ENCODE measurements at regions of chr2 and their contacts with region 1.

Region 1: GRCh38 chr2:135985018-135985825 is at the start of gene DARS1:
- DNase-seq: peak; percentile 67 to 89 (median 78)
- ATAC-seq: peak; percentile 92
- H3K4me3 ChIP-seq: peak within 1 kb of the TSS; percentile 82
- H3K4me3 Mint-ChIP-seq: peak within 1 kb of the TSS; percentile 90 to 99 (median 97)
- H3K27ac ChIP-seq: peak within 1 kb of the TSS; percentile 95
- H3K27ac Mint-ChIP-seq: peak within 1 kb of the TSS; percentile 98 to 99 (median 98)
- H3K4me1 ChIP-seq: peaks cover 0 to 24% of the 10 kb centered on the region in 2 donors
- H3K4me1 Mint-ChIP-seq: peaks cover 9 to 66% (median 54%) of the 10 kb centered on the region in 7 donors
- H3K27me3 ChIP-seq: no peaks in the 10 kb centered on the region
- H3K27me3 Mint-ChIP-seq: no peaks in the 10 kb centered on the region
- total RNA-seq, gene DARS1: 45.3 to 140 (median 63.4) TPM

Region 2: GRCh38 chr2:135741395-135742324 is 243.6 kb before region 1 on chr2 and contains the start of gene UBXN4:
- CTCF ChIA-PET with region 1: no interaction called
- POLR2A ChIA-PET with region 1: no interaction called
- intact Hi-C with region 1: loop called in 1 of 2 experiments (anchors 1 kb)
- DNase-seq: peak; percentile 73 to 93 (median 88)
- ATAC-seq: peak; percentile 95
- H3K4me3 ChIP-seq: peak within 1 kb of the TSS; percentile 88
- H3K4me3 Mint-ChIP-seq: peak within 1 kb of the TSS; percentile 92 to 98 (median 95)
- H3K27ac ChIP-seq: peak within 1 kb of the TSS; percentile 97
- H3K27ac Mint-ChIP-seq: peak within 1 kb of the TSS; percentile 89 to 99 (median 95)
- H3K4me1 ChIP-seq: peaks cover 20 to 22% of the 10 kb centered on the region in 2 donors
- H3K4me1 Mint-ChIP-seq: peaks cover 24 to 47% (median 43%) of the 10 kb centered on the region in 7 donors
- H3K27me3 ChIP-seq: no peaks in the 10 kb centered on the region
- H3K27me3 Mint-ChIP-seq: no peaks in the 10 kb centered on the region
- total RNA-seq, gene UBXN4: 115 to 158 (median 145) TPM

Region 3: GRCh38 chr2:135960656-135961551 is 24.3 kb before region 1 on chr2:
- CTCF ChIA-PET with region 1: no interaction called
- POLR2A ChIA-PET with region 1: interaction called, 3 read pairs
- intact Hi-C with region 1: loop called (anchors 1 to 2 kb)
- DNase-seq: peak in 6 of 9 donors; percentile 3 to 44 (median 26)
- ATAC-seq: peak; percentile 76
- H3K4me3 ChIP-seq: no peak overlapping the region
- H3K4me3 Mint-ChIP-seq: peak overlapping the region in 9 of 10 donors; percentile 3 to 79 (median 37)
- H3K27ac ChIP-seq: peak overlapping the region; percentile 40
- H3K27ac Mint-ChIP-seq: peak overlapping the region; percentile 51 to 93 (median 83)
- H3K4me1 ChIP-seq: peaks cover 18 to 26% of the 10 kb centered on the region in 2 donors
- H3K4me1 Mint-ChIP-seq: peaks cover 37 to 67% (median 60%) of the 10 kb centered on the region in 7 donors
- H3K27me3 ChIP-seq: no peaks in the 10 kb centered on the region
- H3K27me3 Mint-ChIP-seq: no peaks in the 10 kb centered on the region

Region 4: DNA sequence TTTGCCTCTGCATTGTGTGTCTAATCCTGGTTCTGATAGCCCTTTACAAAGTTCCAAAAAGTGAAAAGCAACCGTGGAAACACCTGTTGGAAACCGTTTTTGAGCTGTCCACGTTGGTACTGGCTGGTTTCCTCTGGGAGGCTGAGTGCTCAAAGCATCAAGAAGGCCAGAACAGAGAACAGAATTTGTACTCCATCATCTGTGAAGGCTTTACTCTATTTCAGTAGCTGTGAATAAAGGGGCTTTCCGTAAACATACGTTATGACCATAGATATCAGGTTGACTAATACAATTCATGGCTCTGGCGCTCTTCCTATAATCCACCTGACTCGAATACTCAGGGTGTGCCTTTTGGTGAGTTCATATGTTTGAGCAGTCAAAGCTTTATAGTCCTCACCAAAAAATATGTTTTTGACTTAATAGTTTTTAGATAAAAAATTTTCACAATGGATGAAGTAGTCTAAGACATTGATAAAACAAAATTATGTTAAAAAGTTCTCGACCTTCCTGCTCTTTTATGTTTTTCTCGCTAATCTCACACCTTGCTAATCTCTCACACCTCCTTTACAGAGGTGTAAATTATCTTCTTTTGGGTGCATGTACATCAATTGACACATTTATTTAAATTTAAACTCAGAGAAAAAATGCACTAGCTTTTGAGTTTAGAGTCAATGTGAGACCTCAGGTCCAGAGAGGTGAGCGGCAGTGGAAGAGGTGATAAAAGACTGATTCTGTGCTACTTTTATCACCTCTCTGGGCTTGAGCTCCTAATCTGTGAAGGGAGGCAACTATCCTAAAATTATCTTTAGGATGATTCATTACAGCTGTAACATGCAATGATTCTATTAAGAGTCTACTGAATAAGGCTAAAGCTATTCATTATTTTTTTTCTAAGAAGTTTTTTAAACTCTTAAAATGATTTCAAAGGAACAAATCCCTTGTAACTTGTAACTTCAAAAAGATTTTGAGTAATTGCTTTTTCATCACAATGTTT is 67.4 kb after region 1 on chr2:
- CTCF ChIA-PET with region 1: no interaction called
- POLR2A ChIA-PET with region 1: interaction called, 5 read pairs
- intact Hi-C with region 1: loop called (anchors 1 kb)
- DNase-seq: no peak
- ATAC-seq: peak; percentile 15
- H3K4me3 ChIP-seq: peak overlapping the region; percentile 12
- H3K4me3 Mint-ChIP-seq: peak overlapping the region; percentile 37 to 85 (median 70)
- H3K27ac ChIP-seq: peak overlapping the region; percentile 50
- H3K27ac Mint-ChIP-seq: peak overlapping the region; percentile 62 to 96 (median 87)
- H3K4me1 ChIP-seq: peaks cover 86 to 92% of the 10 kb centered on the region in 2 donors
- H3K4me1 Mint-ChIP-seq: peaks cover 60 to 93% (median 90%) of the 10 kb centered on the region in 7 donors
- H3K27me3 ChIP-seq: no peaks in the 10 kb centered on the region
- H3K27me3 Mint-ChIP-seq: no peaks in the 10 kb centered on the region

Region 5: GRCh38 chr2:136327162-136327852 is 342.1 kb after region 1 on chr2:
- CTCF ChIA-PET with region 1: no interaction called
- POLR2A ChIA-PET with region 1: interaction called, 6 read pairs
- intact Hi-C with region 1: loop called in 1 of 2 experiments (anchors 1 kb)
- DNase-seq: peak; percentile 28 to 90 (median 83)
- ATAC-seq: peak; percentile 93
- H3K4me3 ChIP-seq: peak overlapping the region; percentile 38
- H3K4me3 Mint-ChIP-seq: peak overlapping the region; percentile 74 to 89 (median 82)
- H3K27ac ChIP-seq: peak overlapping the region; percentile 74
- H3K27ac Mint-ChIP-seq: peak overlapping the region; percentile 93 to 99 (median 97)
- H3K4me1 ChIP-seq: peaks cover 17 to 44% of the 10 kb centered on the region in 2 donors
- H3K4me1 Mint-ChIP-seq: peaks cover 43 to 73% (median 62%) of the 10 kb centered on the region in 7 donors
- H3K27me3 ChIP-seq: no peaks in the 10 kb centered on the region
- H3K27me3 Mint-ChIP-seq: no peaks in the 10 kb centered on the region

Region 6: GRCh38 chr2:136764452-136765255 is 779.4 kb after region 1 on chr2:
- CTCF ChIA-PET with region 1: no interaction called
- POLR2A ChIA-PET with region 1: no interaction called
- intact Hi-C with region 1: no loop called
- DNase-seq: no peak
- ATAC-seq: peak; percentile 20
- H3K4me3 ChIP-seq: no peak overlapping the region
- H3K4me3 Mint-ChIP-seq: peak overlapping the region in 6 of 10 donors; percentile 5 to 67 (median 37)
- H3K27ac ChIP-seq: no peak overlapping the region
- H3K27ac Mint-ChIP-seq: no peak overlapping the region
- H3K4me1 ChIP-seq: no peaks in the 10 kb centered on the region
- H3K4me1 Mint-ChIP-seq: peaks cover 0 to 17% (median 6%) of the 10 kb centered on the region in 7 donors
- H3K27me3 ChIP-seq: peaks cover 0 to 10% of the 10 kb centered on the region in 2 donors
- H3K27me3 Mint-ChIP-seq: peaks cover 65 to 79% (median 70%) of the 10 kb centered on the region in 5 donors